ENCODE measurements at regions of chr7 and their contacts with region 1.

Region 1: DNA sequence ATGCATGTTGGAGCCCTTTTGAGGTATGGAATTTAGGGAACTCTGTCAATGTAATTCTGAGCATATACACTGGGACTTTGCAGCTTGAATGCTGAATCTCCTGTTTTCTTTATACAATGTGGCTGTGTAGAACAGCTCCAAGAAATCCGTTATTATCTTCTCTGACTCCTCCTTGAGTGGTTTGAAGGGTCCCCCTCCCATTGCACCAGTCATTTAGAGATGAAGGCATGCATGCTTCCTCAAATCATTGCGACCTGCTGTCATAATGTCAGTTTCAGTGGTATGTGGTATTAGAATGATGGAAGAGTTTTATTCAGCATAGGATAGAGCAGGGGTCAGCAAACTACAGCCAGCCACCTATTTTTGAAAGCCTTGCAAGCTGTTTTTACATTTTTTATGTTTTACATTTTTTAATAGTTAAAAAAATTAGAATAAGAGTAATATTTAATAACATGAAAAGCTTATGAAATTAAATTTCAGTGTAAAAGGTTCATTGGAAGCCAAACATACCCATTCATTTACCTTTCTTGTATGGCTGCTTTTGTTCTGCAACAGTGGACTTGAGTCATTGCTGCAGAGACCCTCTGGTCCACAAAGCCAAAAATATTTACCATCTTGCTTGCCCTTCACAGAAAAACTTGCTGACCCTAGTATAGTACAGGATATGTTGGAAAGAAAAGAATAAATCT is 8.1 kb downstream of the STK17A start:
- DNase-seq: peak; percentile 70
- ATAC-seq: peak; percentile 63
- H3K4me3 Mint-ChIP-seq: peak overlapping the region; percentile 15
- H3K27ac Mint-ChIP-seq: peak overlapping the region; percentile 82
- H3K4me1 Mint-ChIP-seq: peaks cover 83% of the 10 kb centered on the region
- H3K27me3 Mint-ChIP-seq: no peaks in the 10 kb centered on the region

Region 2: GRCh38 chr7:43328785-43329380 is 262.1 kb before region 1 on chr7:
- CTCF ChIA-PET with region 1: no interaction called
- POLR2A ChIA-PET with region 1: no interaction called
- intact Hi-C with region 1: no loop called
- DNase-seq: no peak
- ATAC-seq: no peak
- H3K4me3 Mint-ChIP-seq: no peak overlapping the region
- H3K27ac Mint-ChIP-seq: no peak overlapping the region
- H3K4me1 Mint-ChIP-seq: no peaks in the 10 kb centered on the region
- H3K27me3 Mint-ChIP-seq: peaks cover 5% of the 10 kb centered on the region

Region 3: DNA sequence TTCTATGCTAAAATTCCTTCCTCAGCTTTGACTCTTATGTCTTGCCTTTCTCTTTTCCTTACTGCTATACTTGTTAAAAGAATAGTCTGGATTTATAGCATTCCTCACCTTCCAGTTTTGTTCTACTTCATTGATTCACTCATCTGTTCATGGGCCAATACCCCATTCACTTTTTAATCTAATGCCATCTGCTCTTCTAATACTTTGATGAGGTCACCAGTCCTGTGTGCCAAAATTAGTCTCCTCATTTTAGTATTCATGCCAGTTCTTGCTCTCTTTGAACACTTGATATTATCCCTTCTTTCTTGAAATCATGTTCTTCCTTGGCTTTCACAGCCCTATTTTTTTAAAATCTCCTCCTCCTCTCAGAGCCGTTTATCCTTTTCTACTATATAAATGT is 11.3 kb after region 1 on chr7:
- CTCF ChIA-PET with region 1: interaction called, 6 read pairs
- POLR2A ChIA-PET with region 1: interaction called, 3 read pairs
- intact Hi-C with region 1: loop called (anchors 1 kb)
- DNase-seq: no peak
- ATAC-seq: no peak
- H3K4me3 Mint-ChIP-seq: no peak overlapping the region
- H3K27ac Mint-ChIP-seq: no peak overlapping the region
- H3K4me1 Mint-ChIP-seq: peaks cover 48% of the 10 kb centered on the region
- H3K27me3 Mint-ChIP-seq: no peaks in the 10 kb centered on the region

Region 4: DNA sequence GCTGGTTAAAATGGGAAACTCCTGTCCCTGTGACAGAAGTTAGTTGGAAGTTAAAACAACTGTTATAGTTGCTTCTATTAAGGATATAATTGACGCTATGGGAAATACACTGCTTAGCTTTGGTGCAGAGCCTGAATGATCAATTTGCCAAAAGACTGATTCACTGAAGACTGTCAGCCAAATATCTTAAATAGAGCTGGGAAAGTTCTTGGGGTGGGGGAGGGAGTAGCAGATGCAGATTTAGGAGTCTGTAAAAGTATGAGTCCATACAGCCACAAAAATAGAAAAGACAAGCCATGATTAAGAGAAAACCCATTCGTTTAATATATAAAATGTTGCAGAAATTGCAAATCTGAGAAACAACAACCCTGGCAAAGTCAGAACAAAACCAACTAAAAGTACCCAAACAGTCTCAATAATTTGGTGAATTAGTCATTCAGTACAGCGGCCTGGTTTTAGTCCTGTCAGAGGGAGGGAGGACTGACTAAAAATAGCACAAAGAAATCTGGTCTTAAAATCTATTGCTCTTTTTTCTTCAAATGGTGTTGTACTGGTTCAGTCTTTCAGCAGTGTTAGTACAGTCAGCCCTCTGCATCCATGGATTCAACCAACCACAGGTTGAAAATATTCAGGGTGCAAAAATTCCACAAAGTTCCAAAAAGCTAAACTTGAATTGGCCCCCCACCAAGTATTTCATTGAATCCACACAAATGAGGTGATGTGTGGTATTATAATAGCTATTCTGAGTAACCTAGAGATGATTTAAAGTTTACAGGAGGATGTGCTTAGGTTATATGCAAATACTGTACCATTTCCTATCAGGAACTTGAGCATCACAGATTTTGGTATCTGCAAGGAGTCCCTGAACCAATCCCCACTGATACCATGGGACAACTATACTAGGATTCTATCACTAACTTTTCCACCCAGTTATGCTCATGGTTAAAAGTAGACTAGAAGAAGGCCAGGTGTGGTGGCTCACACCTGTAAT is 21.9 kb after region 1 on chr7:
- CTCF ChIA-PET with region 1: interaction called, 7 read pairs
- POLR2A ChIA-PET with region 1: interaction called, 5 read pairs
- intact Hi-C with region 1: loop called (anchors 1 kb)
- DNase-seq: peak; percentile 33
- ATAC-seq: peak; percentile 86
- H3K4me3 Mint-ChIP-seq: peak overlapping the region; percentile 10
- H3K27ac Mint-ChIP-seq: peak overlapping the region; percentile 87
- H3K4me1 Mint-ChIP-seq: peaks cover 73% of the 10 kb centered on the region
- H3K27me3 Mint-ChIP-seq: no peaks in the 10 kb centered on the region

Region 5: DNA sequence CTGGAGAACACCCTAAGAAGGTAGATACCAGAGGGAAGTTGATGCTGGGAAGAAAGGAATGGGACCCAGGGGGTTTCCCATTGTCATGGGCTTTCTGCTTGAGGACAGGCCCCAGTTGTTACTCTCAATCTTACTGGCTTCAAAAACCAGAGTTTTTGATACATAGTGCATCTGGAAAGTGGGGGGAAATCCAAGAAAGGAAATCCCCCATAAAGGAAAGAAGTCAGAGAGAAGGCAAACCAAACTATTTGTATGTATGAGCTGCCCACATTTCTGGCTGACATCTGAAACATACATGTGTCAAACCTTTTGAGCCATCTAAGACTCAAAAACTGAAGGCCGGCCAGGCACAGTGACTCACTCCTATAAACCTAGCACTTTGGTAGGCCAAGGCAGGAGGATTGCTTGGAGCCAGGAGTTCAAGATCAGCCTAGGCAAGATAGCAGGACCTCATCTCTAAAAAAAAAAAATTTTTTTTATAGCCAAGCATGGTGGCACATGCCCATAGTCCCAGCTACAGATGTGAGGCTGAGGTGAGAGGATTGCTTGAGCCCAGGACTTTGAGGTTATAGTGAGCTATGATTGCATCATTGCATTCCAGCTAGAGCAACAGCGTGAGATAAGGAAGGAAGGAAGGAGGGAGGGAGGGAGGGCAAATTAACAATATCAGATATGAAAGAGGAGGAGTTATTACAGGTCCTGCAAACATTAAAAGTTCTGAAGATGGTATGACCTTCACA is 145.0 kb after region 1 on chr7:
- CTCF ChIA-PET with region 1: interaction called, 3 read pairs
- POLR2A ChIA-PET with region 1: no interaction called
- intact Hi-C with region 1: loop called in 1 of 2 experiments (anchors 1 kb)
- DNase-seq: peak; percentile 74
- ATAC-seq: peak; percentile 95
- H3K4me3 Mint-ChIP-seq: no peak overlapping the region
- H3K27ac Mint-ChIP-seq: peak overlapping the region; percentile 73
- H3K4me1 Mint-ChIP-seq: peaks cover 22% of the 10 kb centered on the region
- H3K27me3 Mint-ChIP-seq: peaks cover 2% of the 10 kb centered on the region

Region 6: DNA sequence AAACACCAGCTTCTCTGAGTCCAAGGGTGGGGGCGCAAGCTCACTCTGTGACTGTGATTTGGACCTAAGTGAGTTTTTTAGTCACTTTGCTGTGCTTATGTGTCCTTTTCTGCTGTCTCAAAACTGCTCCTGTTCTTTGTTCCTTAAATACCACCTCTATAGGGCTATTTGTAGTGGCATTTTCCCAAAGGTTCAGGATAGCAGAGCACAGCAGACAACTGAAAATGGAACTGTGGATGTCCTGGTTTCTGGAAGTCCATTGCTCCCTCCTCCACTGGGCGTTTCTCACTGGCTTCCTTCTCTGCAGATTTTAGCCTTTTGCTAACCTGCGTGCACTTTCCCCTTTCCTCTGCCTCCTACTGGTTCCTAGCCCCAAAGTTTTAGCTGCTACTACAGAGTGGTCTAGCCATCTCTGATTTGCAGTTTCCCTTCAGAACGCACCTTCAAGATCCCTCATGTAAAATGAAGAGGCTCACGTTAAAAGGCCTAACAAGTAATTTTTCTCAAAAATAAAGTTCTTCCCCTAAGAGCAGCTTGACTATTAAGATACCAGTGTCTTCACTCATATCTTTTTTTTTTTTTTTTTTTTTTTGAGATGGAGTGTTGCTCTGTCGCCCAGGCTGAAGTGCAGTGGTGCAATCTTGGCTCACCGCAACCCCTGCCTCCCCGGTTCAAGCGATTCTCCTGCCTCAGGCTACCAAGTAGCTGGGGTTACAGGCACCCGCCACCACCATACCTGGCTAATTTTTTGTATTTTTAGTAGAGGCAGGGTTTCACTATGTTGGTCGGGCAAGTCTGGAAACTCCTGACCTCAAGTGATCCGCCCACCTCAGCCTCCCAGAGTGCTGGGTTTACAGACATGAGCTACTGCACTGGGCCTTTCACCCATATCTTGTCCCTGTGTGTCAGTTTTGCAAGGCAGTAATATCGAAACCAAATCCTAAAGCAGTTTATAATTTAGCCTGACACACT is 193.3 kb after region 1 on chr7:
- CTCF ChIA-PET with region 1: no interaction called
- POLR2A ChIA-PET with region 1: no interaction called
- intact Hi-C with region 1: no loop called
- DNase-seq: peak; percentile 57
- ATAC-seq: peak; percentile 90
- H3K4me3 Mint-ChIP-seq: no peak overlapping the region
- H3K27ac Mint-ChIP-seq: no peak overlapping the region
- H3K4me1 Mint-ChIP-seq: peaks cover 9% of the 10 kb centered on the region
- H3K27me3 Mint-ChIP-seq: no peaks in the 10 kb centered on the region

Region 7: GRCh38 chr7:45367026-45367425 is 1776.0 kb after region 1 on chr7:
- CTCF ChIA-PET with region 1: no interaction called
- POLR2A ChIA-PET with region 1: no interaction called
- intact Hi-C with region 1: no loop called
- DNase-seq: no peak
- ATAC-seq: no peak
- H3K4me3 Mint-ChIP-seq: no peak overlapping the region
- H3K27ac Mint-ChIP-seq: no peak overlapping the region
- H3K4me1 Mint-ChIP-seq: no peaks in the 10 kb centered on the region
- H3K27me3 Mint-ChIP-seq: peaks cover 13% of the 10 kb centered on the region

Measured in activated CD4-positive, alpha-beta T cell treated with anti-CD3 and anti-CD28 coated beads for 36 hours (primary cell).